Activated CD4-positive, alpha-beta T cell treated with anti-CD3 and anti-CD28 coated beads, Interleukin-2, amount 10 ng/mL, durations not matched to agents 7 days and 5 days (primary cell): ENCODE measurements at regions of chr5 and their contacts with region 1.

Region 1: DNA sequence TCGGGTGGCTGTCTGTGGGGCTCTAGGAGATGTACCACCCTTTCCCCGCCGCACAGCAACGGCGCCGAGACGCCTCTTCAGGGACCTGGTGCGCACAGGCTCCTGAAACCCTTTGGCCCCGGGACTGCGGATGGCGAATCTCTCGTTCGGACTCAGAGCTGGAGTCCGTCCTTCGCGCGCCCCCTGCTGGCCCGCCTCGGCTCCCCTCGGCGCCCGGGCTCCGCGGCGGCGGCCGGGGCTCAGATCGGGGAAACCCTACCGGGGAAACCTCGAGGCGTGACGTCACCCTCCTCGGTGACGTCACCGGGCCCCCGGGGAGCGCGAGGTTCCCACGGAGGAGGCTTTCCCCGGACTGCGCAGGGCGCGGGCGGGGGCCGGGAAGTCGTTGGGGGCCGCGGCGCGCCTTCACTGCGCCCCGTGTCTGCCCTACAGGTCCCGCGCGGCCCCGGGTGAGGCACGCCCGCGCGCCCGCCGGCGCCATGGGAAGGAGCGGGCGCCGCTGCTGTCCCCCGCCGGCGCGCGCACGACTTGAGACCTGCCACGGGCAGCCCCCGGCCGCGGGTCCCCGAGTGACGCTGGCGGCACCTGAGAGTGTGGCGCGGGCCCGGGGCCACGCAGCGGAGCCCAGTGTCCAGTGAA is 7.9 kb downstream of the PRR7 start:
- DNase-seq: peak; percentile 90
- H3K4me3 Mint-ChIP-seq: peak overlapping the region; percentile 68
- H3K27ac Mint-ChIP-seq: peak overlapping the region; percentile 68
- H3K4me1 Mint-ChIP-seq: peaks cover 28% of the 10 kb centered on the region
- H3K27me3 Mint-ChIP-seq: peaks cover 11% of the 10 kb centered on the region

Region 2: DNA sequence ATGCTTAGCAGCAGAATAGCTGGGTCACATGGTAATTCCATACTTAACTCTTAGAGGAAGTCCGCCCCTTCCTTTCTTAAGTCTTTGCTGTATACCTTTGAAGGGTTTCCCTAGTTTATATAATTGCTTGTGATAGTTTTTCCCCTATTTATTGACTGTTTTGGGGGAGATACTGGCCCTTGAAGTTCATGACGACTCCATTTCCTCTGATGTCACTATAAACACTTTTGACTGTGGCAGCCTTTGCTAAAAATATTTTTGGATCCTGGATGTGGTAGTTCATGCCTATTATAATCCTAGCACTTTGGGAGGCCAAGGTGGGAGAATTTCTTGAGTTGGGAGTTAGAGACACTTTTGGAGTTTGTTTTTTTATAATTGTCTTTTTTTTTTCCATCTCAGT is 282.6 kb before region 1 on chr5:
- CTCF ChIA-PET with region 1: no interaction called
- POLR2A ChIA-PET with region 1: no interaction called
- DNase-seq: no peak
- H3K4me3 Mint-ChIP-seq: no peak overlapping the region
- H3K27ac Mint-ChIP-seq: no peak overlapping the region
- H3K4me1 Mint-ChIP-seq: peaks cover 13% of the 10 kb centered on the region
- H3K27me3 Mint-ChIP-seq: no peaks in the 10 kb centered on the region

Region 3: DNA sequence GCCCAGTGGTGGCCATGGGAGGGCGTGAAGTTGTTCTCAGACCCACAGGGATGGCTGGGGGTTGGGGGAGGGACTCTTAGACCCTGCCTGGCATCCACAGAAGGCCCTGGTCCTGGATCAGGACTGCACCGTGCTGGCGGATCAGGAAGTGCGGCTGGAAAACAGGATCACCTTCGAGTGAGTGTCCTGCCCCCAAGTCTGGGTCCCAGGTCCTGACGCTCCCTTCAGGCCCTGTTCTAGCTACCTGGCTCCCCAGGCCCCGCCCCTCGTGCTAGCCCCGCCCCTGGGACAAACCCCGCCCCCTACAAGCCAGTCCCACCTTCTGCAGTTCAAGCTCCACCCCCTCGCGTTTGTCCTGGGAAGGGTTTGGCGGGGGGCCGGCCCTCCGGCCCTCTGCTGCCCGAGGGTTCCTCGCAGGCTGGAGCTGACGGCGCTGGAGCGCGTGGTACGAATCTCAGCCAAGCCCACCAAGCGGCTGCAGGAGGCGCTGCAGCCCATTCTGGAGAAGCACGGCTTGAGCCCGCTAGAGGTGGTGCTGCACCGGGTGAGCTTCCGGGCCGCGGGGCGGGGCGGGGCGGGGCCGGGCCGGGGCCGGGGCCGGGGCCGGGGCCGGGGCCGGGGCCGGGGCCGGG is 83.9 kb before region 1 on chr5:
- CTCF ChIA-PET with region 1: interaction called, 11 read pairs
- POLR2A ChIA-PET with region 1: no interaction called
- DNase-seq: peak; percentile 56
- H3K4me3 Mint-ChIP-seq: peak overlapping the region; percentile 36
- H3K27ac Mint-ChIP-seq: peak overlapping the region; percentile 36
- H3K4me1 Mint-ChIP-seq: peaks cover 66% of the 10 kb centered on the region
- H3K27me3 Mint-ChIP-seq: no peaks in the 10 kb centered on the region

Region 4: GRCh38 chr5:177473461-177474001 is 19.0 kb after region 1 on chr5 and contains the start of gene DBN1:
- CTCF ChIA-PET with region 1: interaction called, 65 read pairs
- POLR2A ChIA-PET with region 1: no interaction called
- DNase-seq: no peak
- H3K4me3 Mint-ChIP-seq: peak within 1 kb of the TSS; percentile 69
- H3K27ac Mint-ChIP-seq: peak within 1 kb of the TSS; percentile 36
- H3K4me1 Mint-ChIP-seq: peaks cover 43% of the 10 kb centered on the region
- H3K27me3 Mint-ChIP-seq: peaks cover 13% of the 10 kb centered on the region
- total RNA-seq, gene DBN1: 4.2 to 4.8 TPM

Region 5: DNA sequence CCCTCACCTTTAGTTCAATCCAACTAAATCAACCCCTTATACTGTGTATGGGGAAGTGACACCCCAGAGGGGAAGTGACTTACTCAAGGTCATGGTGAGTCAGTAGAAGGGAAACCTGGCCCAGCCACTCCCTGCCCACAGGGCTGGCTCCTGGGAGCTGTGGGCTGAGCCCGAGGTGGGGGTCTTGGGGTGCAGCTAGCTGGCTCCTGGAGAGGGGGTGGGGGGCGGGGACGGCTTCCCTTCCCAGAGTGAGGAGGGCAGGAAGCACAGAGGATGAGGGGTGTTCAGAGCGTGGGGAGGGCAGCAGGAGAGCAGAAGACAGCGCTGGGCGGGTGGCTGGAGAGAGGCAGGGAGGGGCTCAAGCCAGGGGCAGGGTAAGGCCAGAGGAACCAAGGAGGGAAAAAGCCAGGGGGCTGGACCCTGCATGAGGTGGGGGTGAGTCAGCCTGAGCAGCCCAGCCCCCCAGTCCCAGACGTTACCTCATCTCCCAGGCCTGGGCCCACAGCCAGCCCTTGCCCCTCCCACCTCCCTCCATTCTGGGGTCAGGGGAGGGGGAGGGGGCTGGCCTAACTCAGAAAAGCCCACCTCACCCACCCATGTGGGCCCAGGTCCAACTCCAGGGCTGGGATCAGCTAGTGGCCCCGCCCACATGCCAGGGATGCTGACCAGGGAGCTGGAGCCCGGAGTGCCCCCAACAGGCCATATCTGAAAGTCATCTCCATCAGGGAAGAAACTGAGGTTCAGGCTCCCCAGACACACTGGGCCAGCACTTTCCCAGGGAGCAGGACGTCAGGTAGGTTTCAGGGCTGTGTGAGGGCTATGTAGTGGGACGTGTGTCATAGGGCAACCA is 40.1 kb after region 1 on chr5:
- CTCF ChIA-PET with region 1: interaction called, 10 read pairs
- POLR2A ChIA-PET with region 1: no interaction called
- DNase-seq: peak; percentile 33
- H3K4me3 Mint-ChIP-seq: no peak overlapping the region
- H3K27ac Mint-ChIP-seq: peak overlapping the region; percentile 75
- H3K4me1 Mint-ChIP-seq: peaks cover 48% of the 10 kb centered on the region
- H3K27me3 Mint-ChIP-seq: peaks cover 14% of the 10 kb centered on the region